T-cell (primary cell): ENCODE measurements at regions of chr7 and their contacts with region 1.

Region 1: GRCh38 chr7:66768865-66769832 is 28.6 kb downstream of the RABGEF1 start:
- DNase-seq: no peak
- ATAC-seq: no peak
- H3K4me3 ChIP-seq: no peak overlapping the region
- H3K4me3 Mint-ChIP-seq: no peak overlapping the region
- H3K27ac ChIP-seq: no peak overlapping the region
- H3K27ac Mint-ChIP-seq: peak overlapping the region; percentile 40 to 55
- H3K4me1 ChIP-seq: peaks cover 7% of the 10 kb centered on the region in 2 experiments
- H3K4me1 Mint-ChIP-seq: peaks cover 50 to 57% (median 52%) of the 10 kb centered on the region in 3 donors
- H3K27me3 ChIP-seq: no peaks in the 10 kb centered on the region
- H3K27me3 Mint-ChIP-seq: no peaks in the 10 kb centered on the region

Region 2: DNA sequence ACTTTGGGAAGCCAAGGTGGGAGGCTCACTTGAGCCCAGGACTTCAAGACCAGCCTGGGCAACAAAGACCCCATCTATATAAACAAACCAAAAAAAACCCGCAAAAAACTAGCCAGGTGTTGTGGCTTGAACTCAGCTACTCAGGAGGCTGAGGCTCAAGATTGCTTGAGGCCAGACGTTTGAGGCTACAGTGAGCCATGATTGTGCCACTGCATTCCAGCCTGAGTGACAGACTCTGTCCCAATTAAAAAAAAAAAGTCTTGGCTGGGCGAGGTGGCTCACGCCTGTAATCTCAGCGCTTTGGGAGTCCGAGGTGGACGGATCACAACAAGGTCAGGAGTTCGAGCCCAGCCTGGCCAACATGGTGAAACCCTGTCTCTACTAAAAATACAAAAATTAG is 17.2 kb before region 1 on chr7:
- CTCF ChIA-PET with region 1: no interaction called
- POLR2A ChIA-PET with region 1: no interaction called
- DNase-seq: no peak
- ATAC-seq: no peak
- H3K4me3 ChIP-seq: no peak overlapping the region
- H3K4me3 Mint-ChIP-seq: no peak overlapping the region
- H3K27ac ChIP-seq: no peak overlapping the region
- H3K27ac Mint-ChIP-seq: no peak overlapping the region
- H3K4me1 ChIP-seq: peaks cover 0 to 2% of the 10 kb centered on the region in 2 experiments
- H3K4me1 Mint-ChIP-seq: peaks cover 45 to 58% (median 57%) of the 10 kb centered on the region in 3 donors
- H3K27me3 ChIP-seq: no peaks in the 10 kb centered on the region
- H3K27me3 Mint-ChIP-seq: no peaks in the 10 kb centered on the region

Region 3: DNA sequence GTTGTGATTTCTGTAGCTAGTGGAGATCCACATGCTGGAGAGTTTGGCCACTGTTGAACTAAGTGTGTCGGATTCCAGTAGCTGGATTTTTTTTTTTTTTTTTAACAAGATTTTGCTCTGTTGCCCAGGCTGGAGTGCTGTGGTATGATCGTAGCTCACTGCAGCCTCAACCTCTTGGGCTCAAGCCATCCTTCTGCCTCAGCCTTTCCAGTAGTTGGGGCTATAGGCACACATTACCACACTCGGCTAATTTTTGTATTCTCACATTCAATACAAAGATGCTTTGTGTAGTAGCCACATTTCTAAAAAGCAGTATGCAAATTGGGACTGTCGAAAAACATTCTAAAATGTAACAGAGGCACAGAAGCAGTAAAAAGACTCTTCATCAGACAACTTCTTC is 34.9 kb after region 1 on chr7:
- CTCF ChIA-PET with region 1: no interaction called
- POLR2A ChIA-PET with region 1: no interaction called
- DNase-seq: no peak
- ATAC-seq: no peak
- H3K4me3 ChIP-seq: no peak overlapping the region
- H3K4me3 Mint-ChIP-seq: no peak overlapping the region
- H3K27ac ChIP-seq: no peak overlapping the region
- H3K27ac Mint-ChIP-seq: no peak overlapping the region
- H3K4me1 ChIP-seq: no peaks in the 10 kb centered on the region
- H3K4me1 Mint-ChIP-seq: no peaks in the 10 kb centered on the region
- H3K27me3 ChIP-seq: no peaks in the 10 kb centered on the region
- H3K27me3 Mint-ChIP-seq: no peaks in the 10 kb centered on the region

Region 4: DNA sequence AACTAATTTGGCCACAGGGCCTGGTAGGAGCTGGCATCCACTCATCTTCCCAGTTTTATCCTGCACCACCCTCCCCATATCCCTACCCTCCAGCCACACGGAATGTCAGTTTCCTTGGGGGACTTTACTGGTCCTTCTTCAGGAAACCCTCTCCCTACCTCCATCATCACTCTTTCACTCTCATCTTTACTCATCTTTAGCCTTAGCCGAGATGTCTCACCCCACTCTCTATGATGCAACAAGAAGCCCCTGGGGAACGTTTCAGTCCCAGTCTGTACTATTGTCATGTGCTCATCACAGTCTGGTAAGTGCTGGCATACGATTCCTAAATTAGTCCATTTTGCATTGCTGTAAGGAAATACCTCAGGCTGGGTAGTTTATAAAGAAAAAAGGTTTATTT is 117.0 kb after region 1 on chr7:
- CTCF ChIA-PET with region 1: interaction called in 1 of 2 experiments, 15 read pairs
- POLR2A ChIA-PET with region 1: no interaction called
- DNase-seq: no peak
- ATAC-seq: no peak
- H3K4me3 ChIP-seq: no peak overlapping the region
- H3K4me3 Mint-ChIP-seq: no peak overlapping the region
- H3K27ac ChIP-seq: no peak overlapping the region
- H3K27ac Mint-ChIP-seq: no peak overlapping the region
- H3K4me1 ChIP-seq: no peaks in the 10 kb centered on the region
- H3K4me1 Mint-ChIP-seq: no peaks in the 10 kb centered on the region
- H3K27me3 ChIP-seq: no peaks in the 10 kb centered on the region
- H3K27me3 Mint-ChIP-seq: no peaks in the 10 kb centered on the region